GM10248 (cell line): ENCODE measurements at regions of chr14 and their contacts with region 1.

Region 1: DNA sequence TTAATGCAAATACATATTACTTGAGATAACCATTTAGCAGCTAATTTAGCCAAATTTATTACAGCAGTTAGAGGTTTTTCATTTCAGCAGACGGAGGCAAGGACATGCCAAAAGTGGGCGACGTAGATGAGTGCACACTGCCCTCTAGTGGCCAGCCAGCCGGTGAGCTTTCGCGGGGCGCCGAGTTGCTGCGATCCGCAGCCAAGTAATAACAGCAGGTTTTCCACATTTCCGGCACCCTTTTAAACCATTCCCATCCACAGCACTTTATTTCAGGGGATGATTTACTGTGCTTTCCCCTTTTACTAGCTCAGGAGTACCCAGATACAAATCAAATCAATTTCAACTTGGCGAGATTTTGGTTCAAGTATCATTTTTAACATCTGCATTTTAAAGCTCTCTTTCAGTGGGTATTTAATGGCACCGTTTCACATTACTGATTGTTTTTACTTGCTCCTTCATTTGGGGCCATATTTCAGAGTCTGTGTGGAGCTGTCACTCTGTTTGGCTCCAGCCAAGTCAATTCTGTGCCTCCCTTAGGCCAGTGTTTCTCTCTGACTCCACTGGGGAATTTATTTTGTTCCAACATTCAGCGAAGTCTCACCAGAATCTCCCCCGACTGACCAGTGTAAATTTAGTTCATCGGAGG is 158.0 kb downstream of the EGLN3 start:
- DNase-seq: peak; percentile 73
- CTCF ChIP-seq: peak; percentile 96

Region 2: DNA sequence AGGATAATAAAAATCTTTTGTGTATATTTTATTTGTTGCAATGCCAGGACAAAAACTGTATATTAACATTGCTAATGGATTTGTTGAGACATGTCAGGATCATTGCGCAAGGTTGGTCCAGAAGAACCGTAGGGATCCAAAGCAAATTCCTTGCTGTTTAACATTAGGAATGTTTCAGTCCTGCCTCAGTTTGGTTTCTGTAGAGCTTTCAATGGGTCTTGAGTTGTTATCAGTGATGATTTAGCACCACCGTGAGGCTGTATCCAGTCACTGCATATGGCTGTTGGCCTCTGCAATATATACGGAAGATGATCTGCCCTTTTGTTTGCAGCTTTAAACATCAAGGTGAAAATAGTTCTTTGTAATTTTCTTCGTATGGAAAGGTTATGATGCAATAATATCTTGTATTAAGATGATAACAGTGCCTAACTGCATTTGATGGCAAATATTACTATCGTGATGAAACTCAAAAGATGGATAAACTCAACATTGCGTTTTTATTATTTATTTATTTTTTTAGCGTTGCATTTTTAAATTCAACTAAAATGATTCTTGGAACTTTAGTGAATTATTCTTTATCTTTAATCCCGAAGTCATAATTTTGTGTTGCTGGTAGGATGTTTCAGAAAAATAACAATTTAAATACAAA is 1232.5 kb before region 1 on chr14:
- CTCF ChIA-PET with region 1: interaction called, 10 read pairs
- POLR2A ChIA-PET with region 1: no interaction called
- DNase-seq: peak; percentile 41
- CTCF ChIP-seq: peak; percentile 84

Region 3: GRCh38 chr14:32576088-32576795 is 1216.6 kb before region 1 on chr14:
- CTCF ChIA-PET with region 1: interaction called, 65 read pairs
- POLR2A ChIA-PET with region 1: no interaction called
- DNase-seq: peak; percentile 22
- CTCF ChIP-seq: peak; percentile 90

Region 4: GRCh38 chr14:32710731-32711680 is 1081.8 kb before region 1 on chr14:
- CTCF ChIA-PET with region 1: interaction called, 10 read pairs
- POLR2A ChIA-PET with region 1: no interaction called
- DNase-seq: peak; percentile 24
- CTCF ChIP-seq: peak; percentile 38

Region 5: DNA sequence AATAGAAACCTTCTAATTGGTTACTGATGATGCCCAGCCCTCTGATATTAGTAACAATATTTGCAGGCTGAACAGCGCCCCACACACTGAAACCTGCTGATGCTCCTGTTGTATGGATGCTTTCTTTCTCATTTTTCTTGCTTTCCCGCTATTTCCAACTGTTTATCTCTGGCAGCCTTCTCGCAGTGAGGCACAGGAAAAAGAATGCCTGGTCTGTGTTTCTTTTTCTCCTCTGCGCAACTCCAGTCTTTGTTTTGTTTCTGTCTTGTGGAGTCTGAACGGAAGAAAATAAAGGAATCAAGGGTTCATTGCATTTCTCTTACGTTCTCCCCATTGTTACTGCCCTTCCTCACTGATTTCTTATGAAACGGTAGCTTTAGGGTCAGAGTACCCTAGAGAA is 293.2 kb before region 1 on chr14:
- CTCF ChIA-PET with region 1: no interaction called
- POLR2A ChIA-PET with region 1: no interaction called
- DNase-seq: no peak
- CTCF ChIP-seq: no peak

Region 6: GRCh38 chr14:33773205-33774030 is 19.4 kb before region 1 on chr14:
- CTCF ChIA-PET with region 1: interaction called, 12 read pairs
- POLR2A ChIA-PET with region 1: no interaction called
- DNase-seq: no peak
- CTCF ChIP-seq: no peak

Region 7: DNA sequence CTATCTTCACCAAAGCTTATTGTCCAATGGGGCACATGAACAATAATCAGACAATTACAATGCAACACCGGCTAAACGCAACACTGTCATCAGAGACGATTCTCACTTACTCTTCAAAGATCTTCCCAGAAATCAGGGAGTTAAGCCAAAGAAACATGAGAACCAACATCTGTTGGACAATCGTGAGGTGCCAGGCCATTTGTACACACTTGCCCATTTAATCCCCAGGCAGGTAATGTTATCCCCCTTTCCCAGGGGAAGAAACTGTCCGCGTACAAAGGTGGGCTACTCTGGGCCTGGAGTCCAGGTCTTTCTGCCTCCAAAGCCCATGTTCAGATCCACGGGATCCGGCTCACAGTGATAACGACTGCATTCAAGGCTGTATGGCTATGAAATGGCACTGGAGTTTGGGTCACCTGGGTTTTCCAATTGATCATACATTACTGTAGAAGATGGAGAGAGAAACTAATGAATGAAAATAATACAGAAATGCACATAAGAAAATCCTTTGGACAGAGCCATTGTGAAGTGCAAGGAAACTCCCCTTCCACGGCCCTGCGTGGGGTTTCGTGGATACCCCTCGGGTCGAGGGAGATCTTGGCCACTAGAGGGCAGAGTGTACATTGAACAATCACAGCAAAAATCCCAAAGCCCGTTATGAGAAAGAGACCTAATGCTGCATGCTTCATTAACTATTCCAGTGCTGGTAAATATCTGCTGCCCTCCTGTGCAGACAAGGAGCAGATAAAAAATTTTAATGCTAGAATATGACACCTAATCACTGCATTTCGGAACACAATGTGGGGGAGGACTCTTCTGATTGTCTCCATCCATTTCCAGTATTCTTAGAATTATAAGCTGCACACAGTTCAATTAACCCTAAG is 46.6 kb after region 1 on chr14:
- CTCF ChIA-PET with region 1: interaction called, 10 read pairs
- POLR2A ChIA-PET with region 1: no interaction called
- DNase-seq: peak; percentile 60
- CTCF ChIP-seq: peak; percentile 63

Region 8: GRCh38 chr14:33866425-33867088 is 73.7 kb after region 1 on chr14:
- CTCF ChIA-PET with region 1: no interaction called
- POLR2A ChIA-PET with region 1: no interaction called
- DNase-seq: no peak
- CTCF ChIP-seq: no peak